SK-N-SH (cell line): ENCODE measurements at regions of chr21 and their contacts with region 1.

Region 1: DNA sequence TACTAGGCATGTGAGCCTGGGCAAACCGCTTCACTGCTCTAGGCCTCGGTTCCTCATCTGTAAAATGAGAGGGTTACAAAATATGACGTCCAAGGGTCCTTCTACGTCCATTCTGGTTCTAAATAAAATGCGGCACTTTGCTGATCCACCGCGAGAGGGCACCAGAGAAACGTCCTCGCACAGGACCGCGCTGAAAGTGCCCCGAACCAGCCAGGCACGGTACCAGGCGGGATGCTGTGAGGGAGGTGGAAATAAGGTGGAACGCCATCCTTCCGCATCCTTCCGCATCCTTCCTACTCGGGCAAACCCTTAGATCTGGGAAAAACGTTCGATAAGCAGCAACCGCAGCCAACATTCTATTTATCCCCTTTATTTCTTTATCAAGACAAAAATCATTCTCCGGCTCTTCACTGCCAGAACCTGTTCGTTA is 60.3 kb upstream of the KRTAP19-8 start:
- DNase-seq: peak; percentile 75
- H3K4me3 ChIP-seq: no peak overlapping the region; a peak in 1 of 4 replicates
- H3K27ac ChIP-seq: no peak overlapping the region
- H3K4me1 ChIP-seq: peaks cover 0 to 2% of the 10 kb centered on the region in 2 experiments; a peak in 1 of 4 replicates
- H3K27me3 ChIP-seq: no peaks in the 10 kb centered on the region; the same call in 1 of the 2 replicates
- CTCF ChIP-seq: peak; percentile 92
- EP300 ChIP-seq: no peak
- RAD21 ChIP-seq: peak; percentile 90

Region 2: GRCh38 chr21:30882866-30883597 is 215.6 kb before region 1 on chr21:
- CTCF ChIA-PET with region 1: no interaction called
- POLR2A ChIA-PET with region 1: no interaction called
- DNase-seq: no peak
- H3K4me3 ChIP-seq: no peak overlapping the region
- H3K27ac ChIP-seq: no peak overlapping the region
- H3K4me1 ChIP-seq: no peaks in the 10 kb centered on the region
- H3K27me3 ChIP-seq: no peaks in the 10 kb centered on the region
- CTCF ChIP-seq: no peak
- EP300 ChIP-seq: no peak
- RAD21 ChIP-seq: no peak

Region 3: GRCh38 chr21:30962013-30962412 is 136.6 kb before region 1 on chr21:
- CTCF ChIA-PET with region 1: no interaction called
- POLR2A ChIA-PET with region 1: no interaction called
- DNase-seq: no peak
- H3K4me3 ChIP-seq: no peak overlapping the region
- H3K27ac ChIP-seq: no peak overlapping the region
- H3K4me1 ChIP-seq: no peaks in the 10 kb centered on the region
- H3K27me3 ChIP-seq: no peaks in the 10 kb centered on the region; the same call in 1 of the 2 replicates
- CTCF ChIP-seq: peak; percentile 40
- EP300 ChIP-seq: no peak
- RAD21 ChIP-seq: no peak

Region 4: GRCh38 chr21:31173881-31174555 is 75.4 kb after region 1 on chr21:
- CTCF ChIA-PET with region 1: interaction called, 139 read pairs
- POLR2A ChIA-PET with region 1: interaction called, 3 read pairs
- DNase-seq: peak; percentile 76
- H3K4me3 ChIP-seq: no peak overlapping the region; a peak in 1 of 4 replicates
- H3K27ac ChIP-seq: peak overlapping the region; percentile 10 to 99; a peak in 2 of 4 replicates
- H3K4me1 ChIP-seq: peaks cover 0 to 56% of the 10 kb centered on the region in 2 experiments; a peak in 2 of 4 replicates
- H3K27me3 ChIP-seq: no peaks in the 10 kb centered on the region
- CTCF ChIP-seq: no peak
- EP300 ChIP-seq: peak in 1 of 2 experiments; percentile 94; a peak in 2 of 4 replicates
- RAD21 ChIP-seq: peak; percentile 10; the same call in 1 of the 2 replicates

Region 5: DNA sequence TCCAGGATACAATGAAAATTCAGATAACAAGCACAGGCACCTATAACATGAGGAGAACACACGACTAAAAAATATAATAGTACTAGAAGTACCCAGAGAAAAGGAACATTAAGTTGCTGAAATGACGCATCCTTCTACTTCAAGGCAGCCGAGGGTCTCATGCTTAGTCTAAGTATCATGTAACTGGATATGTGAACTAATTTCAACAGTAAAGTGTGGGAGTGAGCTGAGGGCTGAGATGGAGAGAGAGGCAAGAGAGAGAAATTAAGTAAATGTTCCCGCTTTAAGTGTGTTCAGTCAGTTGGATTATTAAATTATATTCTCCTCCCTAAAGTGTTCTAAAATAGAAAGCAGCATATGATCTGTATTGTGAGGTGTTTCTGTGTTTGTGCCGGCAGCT is 91.9 kb after region 1 on chr21:
- CTCF ChIA-PET with region 1: interaction called, 139 read pairs
- POLR2A ChIA-PET with region 1: no interaction called
- DNase-seq: no peak
- H3K4me3 ChIP-seq: no peak overlapping the region
- H3K27ac ChIP-seq: no peak overlapping the region
- H3K4me1 ChIP-seq: peaks cover 0 to 4% of the 10 kb centered on the region in 2 experiments; a peak in 1 of 4 replicates
- H3K27me3 ChIP-seq: no peaks in the 10 kb centered on the region
- CTCF ChIP-seq: no peak
- EP300 ChIP-seq: no peak
- RAD21 ChIP-seq: no peak

Region 6: DNA sequence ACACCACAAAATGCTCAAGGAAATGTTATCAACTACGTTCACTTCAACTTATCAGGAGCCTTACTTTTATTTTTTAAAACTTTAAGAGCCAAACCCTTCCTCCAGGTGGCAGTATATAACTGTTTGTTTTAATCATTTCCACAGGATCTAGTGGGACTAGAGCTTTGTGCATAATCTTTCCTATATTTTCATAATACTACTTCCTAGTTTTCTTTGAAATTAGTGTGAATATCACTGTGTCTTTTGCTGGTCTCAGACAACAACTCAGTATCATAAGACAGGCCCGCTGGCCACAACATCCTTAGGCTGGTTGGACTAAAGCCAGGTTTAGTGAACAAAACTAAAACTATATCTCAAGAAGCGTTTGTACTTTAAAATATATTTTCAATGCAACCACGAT is 100.0 kb after region 1 on chr21:
- CTCF ChIA-PET with region 1: interaction called, 16 read pairs
- POLR2A ChIA-PET with region 1: no interaction called
- DNase-seq: peak; percentile 55
- H3K4me3 ChIP-seq: no peak overlapping the region; a peak in 1 of 4 replicates
- H3K27ac ChIP-seq: no peak overlapping the region
- H3K4me1 ChIP-seq: peaks cover 0 to 7% of the 10 kb centered on the region in 2 experiments; a peak in 2 of 4 replicates
- H3K27me3 ChIP-seq: no peaks in the 10 kb centered on the region
- CTCF ChIP-seq: peak; percentile 83
- EP300 ChIP-seq: no peak
- RAD21 ChIP-seq: peak; percentile 87